ENCODE measurements at regions of chr14 and their contacts with region 1.

Region 1: DNA sequence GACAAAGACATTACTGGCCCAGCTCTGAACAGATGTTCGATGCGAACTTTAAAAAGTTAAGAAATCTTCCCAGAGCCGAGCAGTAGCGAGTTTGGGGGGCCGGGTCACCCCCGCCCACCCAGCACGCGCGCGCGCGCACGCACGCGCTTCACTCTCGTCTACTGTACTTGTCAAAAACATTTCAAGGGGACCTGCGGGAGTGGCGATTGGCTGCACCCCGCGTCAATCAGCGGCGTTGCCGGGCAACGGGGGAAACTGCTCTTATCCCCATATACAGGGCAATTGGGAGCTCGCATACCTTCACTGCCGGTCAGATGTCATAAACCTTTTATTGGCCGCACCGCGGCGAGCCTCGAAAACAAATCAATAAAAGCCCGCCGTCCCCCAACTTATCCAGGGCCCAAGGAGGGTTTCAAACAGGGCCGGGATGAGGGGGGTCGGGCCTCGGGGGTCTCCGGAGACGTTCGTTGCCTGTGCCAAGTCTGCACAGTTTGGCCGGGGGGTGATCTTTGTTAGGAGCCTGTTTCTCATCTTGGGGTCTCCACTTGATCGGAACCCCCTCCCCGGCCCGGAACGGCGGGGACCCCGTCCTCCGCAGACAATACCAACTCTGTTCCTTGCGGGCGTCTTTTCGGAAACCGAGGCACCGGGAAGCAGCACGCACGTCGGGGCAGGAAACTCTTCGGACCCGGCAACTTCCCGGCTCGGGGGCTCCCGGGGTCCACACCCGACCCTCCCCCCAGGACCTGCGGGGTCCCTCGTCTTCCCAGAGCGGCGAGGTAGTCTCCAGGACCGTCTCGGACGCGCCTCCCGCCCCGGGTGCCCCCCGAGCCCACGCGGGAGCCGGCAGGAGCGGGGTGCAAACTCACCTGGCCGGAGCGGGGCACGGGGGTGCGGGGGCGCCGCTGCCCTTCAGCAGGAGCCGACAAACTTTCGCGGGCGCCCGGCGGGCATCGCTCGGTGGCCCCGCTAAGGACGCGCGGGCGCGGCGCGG is 734 bp downstream of the FOXN3 start:
- DNase-seq: peak; percentile 100
- H3K4me3 Mint-ChIP-seq: peak overlapping the region; percentile 98
- H3K27ac Mint-ChIP-seq: peak overlapping the region; percentile 95
- H3K4me1 Mint-ChIP-seq: peaks cover 40% of the 10 kb centered on the region
- H3K27me3 Mint-ChIP-seq: no peaks in the 10 kb centered on the region

Region 2: GRCh38 chr14:89040460-89041259 is 375.6 kb before region 1 on chr14:
- intact Hi-C with region 1: loop called (anchors 2 kb)
- DNase-seq: peak; percentile 93
- H3K4me3 Mint-ChIP-seq: peak overlapping the region; percentile 70
- H3K27ac Mint-ChIP-seq: no peak overlapping the region
- H3K4me1 Mint-ChIP-seq: peaks cover 7% of the 10 kb centered on the region
- H3K27me3 Mint-ChIP-seq: peaks cover 14% of the 10 kb centered on the region

Region 3: GRCh38 chr14:89303457-89304435 is 112.6 kb before region 1 on chr14:
- intact Hi-C with region 1: loop called (anchors 10 kb)
- DNase-seq: peak; percentile 80
- H3K4me3 Mint-ChIP-seq: peak overlapping the region; percentile 84
- H3K27ac Mint-ChIP-seq: peak overlapping the region; percentile 88
- H3K4me1 Mint-ChIP-seq: peaks cover 41% of the 10 kb centered on the region
- H3K27me3 Mint-ChIP-seq: no peaks in the 10 kb centered on the region

Region 4: GRCh38 chr14:89430391-89431236 is 14.3 kb after region 1 on chr14:
- intact Hi-C with region 1: loop called (anchors 1 kb)
- DNase-seq: peak; percentile 85
- H3K4me3 Mint-ChIP-seq: peak overlapping the region; percentile 78
- H3K27ac Mint-ChIP-seq: peak overlapping the region; percentile 92
- H3K4me1 Mint-ChIP-seq: peaks cover 43% of the 10 kb centered on the region
- H3K27me3 Mint-ChIP-seq: no peaks in the 10 kb centered on the region

Region 5: DNA sequence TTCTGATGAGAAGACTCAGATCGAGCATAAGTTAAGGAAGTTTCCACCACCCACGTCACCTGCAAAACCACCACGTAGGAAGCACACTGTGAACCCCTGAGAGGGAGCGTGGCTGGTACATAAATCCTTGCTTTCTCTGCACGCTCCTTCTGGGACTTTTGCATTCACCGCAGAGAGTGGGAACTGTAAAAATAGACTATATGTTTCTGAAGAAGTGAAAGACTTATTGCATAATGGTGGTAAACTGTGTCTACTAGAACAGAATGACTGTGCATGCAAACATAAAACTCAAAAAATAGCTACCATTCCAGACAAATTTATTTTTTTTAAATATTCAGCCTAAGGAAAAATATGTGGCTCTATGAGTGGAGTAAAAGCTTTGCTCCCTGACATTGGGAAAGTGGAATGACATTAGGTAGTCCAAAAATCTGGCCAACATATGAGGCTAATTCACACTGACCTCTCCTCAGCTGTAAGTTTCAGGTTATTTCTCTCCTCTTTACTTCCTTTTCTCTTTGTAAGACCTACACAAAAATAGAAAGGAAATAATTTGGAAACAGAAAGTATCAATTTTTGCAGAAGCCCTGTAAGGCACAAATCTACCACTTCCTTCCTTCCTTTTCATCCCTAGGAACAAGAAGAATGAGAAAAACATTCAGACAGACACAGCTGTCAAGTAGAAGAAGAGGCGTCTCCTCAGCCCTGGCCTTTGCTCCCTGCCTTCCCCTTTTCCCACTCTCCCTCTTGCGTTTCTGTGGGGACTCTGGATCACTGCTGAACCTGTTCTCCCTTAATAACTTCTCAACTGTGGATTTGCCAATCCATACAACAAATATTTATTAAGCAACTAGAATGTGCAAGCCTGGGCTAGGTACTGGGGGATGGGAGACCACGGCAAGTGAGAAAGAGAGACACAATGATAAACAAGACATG is 265.1 kb after region 1 on chr14:
- intact Hi-C with region 1: loop called (anchors 5 kb)
- DNase-seq: peak; percentile 78
- H3K4me3 Mint-ChIP-seq: peak overlapping the region; percentile 80
- H3K27ac Mint-ChIP-seq: peak overlapping the region; percentile 90
- H3K4me1 Mint-ChIP-seq: peaks cover 30% of the 10 kb centered on the region
- H3K27me3 Mint-ChIP-seq: no peaks in the 10 kb centered on the region

Region 6: GRCh38 chr14:89899917-89900663 is 483.8 kb after region 1 on chr14:
- intact Hi-C with region 1: loop called (anchors 5 kb)
- DNase-seq: peak; percentile 64
- H3K4me3 Mint-ChIP-seq: no peak overlapping the region
- H3K27ac Mint-ChIP-seq: no peak overlapping the region
- H3K4me1 Mint-ChIP-seq: peaks cover 9% of the 10 kb centered on the region
- H3K27me3 Mint-ChIP-seq: peaks cover 5% of the 10 kb centered on the region

Measured in activated CD4-positive, alpha-beta T cell treated with anti-CD3 and anti-CD28 coated beads, Interleukin-2, amount 10 ng/mL, durations not matched to agents 24 days and 14 days (primary cell).